ENCODE measurements at regions of chr5 and their contacts with region 1.

Region 1: DNA sequence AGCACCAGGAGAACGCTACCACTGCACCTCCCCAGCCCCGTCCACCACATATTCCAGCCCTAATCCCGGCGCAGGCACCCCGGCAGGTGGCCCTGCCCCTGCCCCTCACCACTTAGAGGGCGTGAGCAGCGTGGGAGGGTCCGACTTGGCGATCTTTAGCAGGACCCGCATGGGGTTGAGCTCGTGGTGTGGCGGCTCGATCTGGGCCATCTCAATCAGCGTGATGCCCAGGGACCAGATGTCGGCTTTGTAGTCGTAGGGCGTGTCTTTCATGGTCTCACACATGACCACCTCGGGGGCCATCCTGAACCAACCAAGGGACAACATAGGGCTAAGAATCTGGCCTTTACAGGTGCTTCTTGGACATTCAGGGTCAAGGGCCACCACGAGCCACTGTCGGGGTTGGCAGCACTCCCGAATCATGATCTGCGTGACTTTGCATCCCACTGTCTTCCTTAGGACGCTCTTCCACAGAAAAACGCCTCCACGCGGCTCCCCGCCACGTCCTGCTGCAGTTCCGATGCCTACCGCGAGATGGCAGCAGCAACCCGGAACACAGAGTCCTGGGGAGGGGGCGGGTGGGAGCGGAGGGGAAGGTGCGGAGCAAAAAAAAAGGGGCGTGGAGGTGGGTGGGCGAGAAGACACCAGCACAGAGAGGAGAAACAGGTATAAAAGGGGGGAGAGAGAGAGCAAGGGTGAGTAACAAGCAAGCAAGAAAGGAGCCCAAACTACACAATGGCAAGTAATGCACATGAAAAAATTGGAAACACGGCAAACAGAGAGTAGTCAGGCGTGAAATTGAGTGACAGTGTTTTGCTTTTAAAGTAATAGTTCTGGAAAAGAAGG is 81.3 kb downstream of the STK10 start:
- DNase-seq: peak; percentile 72
- H3K4me3 Mint-ChIP-seq: no peak overlapping the region
- H3K27ac Mint-ChIP-seq: no peak overlapping the region
- H3K4me1 Mint-ChIP-seq: peaks cover 36% of the 10 kb centered on the region
- H3K27me3 Mint-ChIP-seq: no peaks in the 10 kb centered on the region
- CTCF ChIP-seq: peak; percentile 98

Region 2: DNA sequence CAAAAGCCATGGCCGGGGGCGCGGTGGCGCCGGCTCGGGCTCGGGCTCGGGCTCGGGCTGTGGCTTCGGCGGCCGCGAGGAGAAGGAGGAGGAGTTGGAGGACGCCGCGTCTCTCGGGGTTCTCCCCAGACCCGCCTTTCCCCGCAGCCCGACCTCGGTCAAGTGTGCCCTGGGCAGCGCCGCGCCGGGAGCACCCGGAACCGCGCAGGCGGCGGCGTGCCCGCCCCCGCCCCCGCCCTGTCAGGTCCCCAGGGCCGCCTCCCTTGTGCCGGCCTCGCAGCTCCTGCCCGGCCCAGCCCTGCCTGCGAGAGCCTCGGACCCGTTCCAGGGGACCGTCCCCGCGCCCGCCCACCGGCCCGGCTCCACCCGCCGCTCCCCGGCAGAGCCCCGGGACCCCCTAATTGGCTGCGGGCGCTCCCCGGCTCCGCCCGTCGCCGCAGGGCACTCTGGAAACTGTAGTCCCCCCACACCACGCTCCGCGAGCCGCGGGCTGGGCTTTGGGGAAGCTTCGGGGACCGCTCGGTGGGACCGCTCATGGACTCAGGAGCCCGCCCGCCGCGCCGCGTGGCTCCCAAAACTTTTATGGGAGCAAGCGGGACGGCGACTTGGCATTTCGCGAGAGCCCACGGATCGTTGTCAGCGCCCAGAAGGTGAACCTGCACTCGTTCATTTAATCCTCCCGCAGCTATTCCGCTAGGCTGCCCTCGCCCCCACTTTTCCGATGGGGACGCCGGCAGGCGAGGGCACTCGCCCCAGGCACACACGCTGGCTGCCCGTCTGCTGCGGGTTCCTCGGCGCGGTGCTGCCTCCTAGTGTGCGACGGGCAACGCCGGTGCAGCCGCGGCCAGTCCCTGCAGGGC is 81.5 kb after region 1 on chr5 and contains the start of gene STK10:
- CTCF ChIA-PET with region 1: interaction called, 8 read pairs
- intact Hi-C with region 1: loop called (anchors 1 kb)
- DNase-seq: peak; percentile 96
- H3K4me3 Mint-ChIP-seq: peak within 1 kb of the TSS; percentile 81
- H3K27ac Mint-ChIP-seq: peak within 1 kb of the TSS; percentile 71
- H3K4me1 Mint-ChIP-seq: peaks cover 20% of the 10 kb centered on the region
- H3K27me3 Mint-ChIP-seq: peaks cover 15% of the 10 kb centered on the region
- CTCF ChIP-seq: peak; percentile 55
- total RNA-seq, gene STK10: 27.4 and 32.1 TPM in 2 replicates

Region 3: DNA sequence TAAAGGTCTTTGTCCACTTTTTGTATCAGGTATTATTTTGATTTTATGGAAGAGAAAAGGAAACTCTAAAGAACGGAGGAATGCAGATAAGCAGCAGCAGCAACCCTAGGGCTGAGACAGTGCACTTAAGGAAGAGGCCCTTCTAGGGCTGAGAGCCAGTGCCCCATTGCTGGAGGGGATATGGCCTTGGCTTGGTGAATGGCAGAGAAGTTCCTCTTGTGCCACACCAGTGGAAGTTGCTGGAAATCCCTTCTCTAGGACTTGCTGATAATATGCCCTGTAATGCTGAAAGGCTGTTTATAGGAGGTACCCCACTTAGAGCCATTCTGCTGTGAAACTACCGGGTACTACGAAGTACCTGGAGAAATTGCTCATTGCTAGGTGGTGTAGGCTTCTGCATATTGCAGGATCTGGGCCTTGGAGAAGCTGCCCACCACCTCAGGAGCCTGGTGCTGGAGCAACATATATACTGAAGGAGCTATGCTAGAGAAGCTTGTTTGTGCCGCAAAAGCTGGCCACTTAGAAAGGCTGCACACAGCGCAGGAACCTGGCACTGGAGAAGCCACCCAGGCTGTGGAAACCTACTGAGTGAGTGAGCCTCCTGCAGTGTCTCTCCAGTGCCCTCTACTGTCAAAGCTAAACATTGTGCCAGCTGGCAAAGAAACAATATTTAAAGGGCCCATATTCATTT is 186.5 kb after region 1 on chr5:
- CTCF ChIA-PET with region 1: interaction called, 4 read pairs
- intact Hi-C with region 1: loop called (anchors 1 kb)
- DNase-seq: peak; percentile 72
- H3K4me3 Mint-ChIP-seq: no peak overlapping the region
- H3K27ac Mint-ChIP-seq: no peak overlapping the region
- H3K4me1 Mint-ChIP-seq: no peaks in the 10 kb centered on the region
- H3K27me3 Mint-ChIP-seq: no peaks in the 10 kb centered on the region
- CTCF ChIP-seq: peak; percentile 87

Region 4: DNA sequence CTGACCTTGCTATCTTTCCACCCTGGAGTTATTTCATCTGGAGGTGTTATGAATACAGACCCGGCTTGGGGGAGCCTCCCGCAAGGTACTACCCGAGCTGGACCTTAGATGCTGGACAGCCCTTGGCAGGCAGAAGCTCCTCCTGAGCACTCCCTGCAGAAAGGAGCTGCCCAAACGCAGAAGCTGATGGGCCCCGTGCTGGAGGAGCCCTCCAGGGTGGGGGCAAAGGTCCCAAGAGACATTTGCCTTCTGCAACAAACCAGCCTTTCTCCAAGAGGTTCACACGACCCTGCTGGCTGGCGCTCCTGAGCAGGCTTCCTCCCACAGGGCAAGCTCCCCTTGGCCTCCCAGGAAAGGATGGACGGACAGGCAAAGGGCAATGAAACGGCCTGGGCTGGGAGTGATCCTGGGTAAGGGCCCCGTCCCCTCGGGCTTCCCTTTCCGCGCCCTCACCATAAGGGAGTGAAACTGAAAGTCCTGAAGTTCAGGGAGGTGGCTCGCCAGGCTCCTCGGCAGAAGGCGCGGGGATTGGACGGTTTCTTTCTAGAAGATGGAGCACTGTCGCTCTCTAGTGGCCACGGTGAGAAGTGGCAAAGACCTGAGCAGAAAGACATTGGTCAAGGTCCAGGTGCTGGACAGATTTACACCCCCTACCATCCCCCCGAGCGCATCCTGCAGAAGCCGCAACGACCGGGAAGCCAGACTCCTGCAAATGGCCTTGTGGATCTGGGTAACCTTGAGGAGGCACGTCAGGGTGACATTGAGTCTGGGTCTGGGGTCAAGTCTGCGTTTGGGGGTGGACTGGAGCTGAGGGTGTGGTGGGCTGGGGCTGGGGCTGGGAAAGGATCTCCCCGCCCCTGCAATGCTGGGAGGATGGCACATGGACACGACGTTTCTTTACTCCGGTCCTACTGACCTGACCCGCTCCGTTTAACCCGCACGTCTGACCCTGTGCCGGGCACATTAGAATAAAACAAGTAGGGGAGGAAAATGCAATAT is 590.7 kb after region 1 on chr5:
- CTCF ChIA-PET with region 1: no interaction called
- intact Hi-C with region 1: loop called (anchors 5 kb)
- DNase-seq: peak; percentile 92
- H3K4me3 Mint-ChIP-seq: peak overlapping the region; percentile 77
- H3K27ac Mint-ChIP-seq: peak overlapping the region; percentile 55
- H3K4me1 Mint-ChIP-seq: peaks cover 10% of the 10 kb centered on the region
- H3K27me3 Mint-ChIP-seq: peaks cover 36% of the 10 kb centered on the region
- CTCF ChIP-seq: peak; percentile 86

Measured in Calu3 (cell line).